Posterior vena cava (tissue), 2 donors: ENCODE measurements at regions of chr13 and their contacts with region 1.

Region 1: DNA sequence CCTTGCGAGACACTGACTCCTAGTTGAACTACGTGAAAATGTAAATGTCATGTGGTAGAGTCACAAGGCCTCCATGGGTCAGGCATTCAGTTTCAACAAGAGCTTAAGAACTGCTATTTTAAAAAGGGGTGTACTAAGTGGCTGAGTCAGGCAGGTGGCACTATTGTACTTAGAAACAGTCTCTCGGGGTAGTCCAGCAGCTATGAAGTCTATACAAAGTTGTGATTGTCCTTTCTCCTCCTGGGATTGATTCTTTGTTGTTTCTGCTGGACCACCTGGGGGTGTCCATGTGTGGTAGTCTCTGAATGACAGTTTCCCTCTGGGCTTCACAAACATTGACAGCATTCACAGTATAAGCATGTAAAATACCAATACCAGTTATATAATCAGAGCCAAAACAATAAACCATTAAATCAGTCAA is 33.0 kb downstream of the UGGT2 start:
- DNase-seq: no peak

Region 2: GRCh38 chr13:96958286-96958891 is 938.2 kb after region 1 on chr13:
- intact Hi-C with region 1: loop called in 1 of 2 experiments (anchors 10 kb)
- DNase-seq: no peak